SK-N-SH (cell line): ENCODE measurements at regions of chr19 and their contacts with region 1.

Region 1: DNA sequence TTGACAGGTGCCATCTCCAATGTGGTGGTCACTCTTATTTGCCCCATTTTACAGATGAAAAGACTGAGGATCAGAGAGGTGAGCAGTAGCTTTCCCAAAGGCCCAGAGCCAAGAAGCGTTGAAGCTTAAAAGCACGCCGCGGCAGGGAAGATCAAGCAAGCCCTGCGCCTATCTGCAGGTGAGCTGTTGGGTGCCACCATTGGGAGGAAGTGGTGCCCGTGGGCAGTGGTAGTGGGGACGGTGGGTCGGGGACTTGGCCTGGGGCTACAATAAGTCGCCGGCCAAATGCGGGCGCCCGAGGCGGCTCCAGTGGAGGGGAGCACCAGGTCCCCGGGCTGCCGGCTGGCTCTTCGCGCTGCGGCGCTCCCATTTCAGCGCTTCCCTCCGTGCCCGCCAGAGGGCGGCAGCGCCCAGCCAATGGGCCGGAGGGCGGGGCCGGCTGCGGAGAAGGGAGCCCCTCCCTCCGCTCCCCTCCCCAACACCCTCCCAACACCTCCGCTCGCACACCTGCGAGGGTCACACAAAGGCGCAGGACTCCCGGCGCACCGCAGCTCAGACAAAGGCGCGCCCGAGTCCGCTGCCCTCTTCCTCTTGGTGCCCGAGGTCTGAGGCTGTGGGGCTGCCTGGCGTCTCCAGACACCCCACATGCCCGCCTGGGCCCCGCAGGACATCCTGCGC is 744 bp upstream of the POU2F2 start:
- DNase-seq: peak; percentile 96
- H3K4me3 ChIP-seq: peak overlapping the region; percentile 24 to 35; a peak in 2 of 4 replicates
- H3K27ac ChIP-seq: no peak overlapping the region
- H3K4me1 ChIP-seq: peaks cover 3 to 22% of the 10 kb centered on the region in 2 experiments; a peak in 2 of 4 replicates
- H3K27me3 ChIP-seq: no peaks in the 10 kb centered on the region; the same call in none of the 2 replicates
- CTCF ChIP-seq: peak; percentile 80
- EP300 ChIP-seq: no peak
- RAD21 ChIP-seq: peak; percentile 92

Region 2: GRCh38 chr19:42098781-42099180 is 34.2 kb before region 1 on chr19:
- CTCF ChIA-PET with region 1: interaction called, 12 read pairs
- POLR2A ChIA-PET with region 1: no interaction called
- DNase-seq: no peak
- H3K4me3 ChIP-seq: no peak overlapping the region
- H3K27ac ChIP-seq: no peak overlapping the region
- H3K4me1 ChIP-seq: peaks cover 0 to 8% of the 10 kb centered on the region in 2 experiments; a peak in 1 of 4 replicates
- H3K27me3 ChIP-seq: no peaks in the 10 kb centered on the region
- CTCF ChIP-seq: no peak
- EP300 ChIP-seq: no peak
- RAD21 ChIP-seq: no peak

Region 3: GRCh38 chr19:42113641-42114348 is 19.2 kb before region 1 on chr19:
- CTCF ChIA-PET with region 1: interaction called, 38 read pairs
- POLR2A ChIA-PET with region 1: no interaction called
- DNase-seq: no peak
- H3K4me3 ChIP-seq: peak overlapping the region in 1 of 2 experiments; percentile 36; a peak in 2 of 4 replicates
- H3K27ac ChIP-seq: peak overlapping the region; percentile 1 to 98; a peak in 3 of 4 replicates
- H3K4me1 ChIP-seq: peaks cover 6 to 40% of the 10 kb centered on the region in 2 experiments; a peak in 3 of 4 replicates
- H3K27me3 ChIP-seq: no peaks in the 10 kb centered on the region
- CTCF ChIP-seq: peak; percentile 50
- EP300 ChIP-seq: peak in 1 of 2 experiments; percentile 88; a peak in 1 of 4 replicates
- RAD21 ChIP-seq: no peak

Region 4: DNA sequence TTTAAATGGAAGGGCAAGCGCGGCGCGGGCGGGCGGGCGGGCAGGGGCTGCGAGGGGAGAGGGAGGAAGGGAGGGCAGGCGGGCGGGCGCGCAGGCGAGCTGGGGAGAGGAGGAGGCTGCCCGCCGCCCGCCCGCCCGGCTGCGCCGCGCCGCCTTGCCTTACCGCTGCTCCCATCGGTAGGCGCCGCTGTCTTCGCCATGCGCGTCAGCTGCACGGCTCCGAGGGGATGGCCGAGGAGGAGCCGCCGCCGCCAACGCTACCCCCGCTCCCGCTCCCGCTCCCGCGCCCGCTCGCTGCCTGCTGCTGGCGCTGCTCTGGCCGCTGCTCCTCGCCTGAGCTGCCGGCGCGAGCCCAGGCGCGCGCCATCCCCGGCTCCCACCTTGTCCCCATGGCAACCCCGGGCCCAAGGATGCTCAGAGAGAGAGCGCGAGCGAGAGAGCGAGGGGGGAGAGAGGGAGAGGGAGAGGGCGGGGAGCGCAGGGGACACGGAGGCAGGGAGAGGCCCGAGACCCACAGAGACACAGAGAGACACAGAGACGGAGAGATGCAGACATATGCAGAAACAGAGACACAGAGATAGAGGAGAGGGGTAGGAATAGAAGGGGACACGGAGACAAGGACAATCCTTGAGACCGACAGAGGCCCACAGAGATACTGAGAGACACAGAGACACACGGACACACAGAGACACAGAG is 44.1 kb after region 1 on chr19:
- CTCF ChIA-PET with region 1: interaction called, 177 read pairs
- POLR2A ChIA-PET with region 1: no interaction called
- DNase-seq: peak; percentile 91
- H3K4me3 ChIP-seq: peak overlapping the region; percentile 52 to 78
- H3K27ac ChIP-seq: peak overlapping the region in 1 of 2 experiments; percentile 41; a peak in 1 of 4 replicates
- H3K4me1 ChIP-seq: peaks cover 0 to 11% of the 10 kb centered on the region in 2 experiments; a peak in 1 of 4 replicates
- H3K27me3 ChIP-seq: peaks cover 37% of the 10 kb centered on the region
- CTCF ChIP-seq: peak; percentile 36
- EP300 ChIP-seq: no peak
- RAD21 ChIP-seq: no peak

Region 5: GRCh38 chr19:42184401-42184861 is 51.4 kb after region 1 on chr19:
- CTCF ChIA-PET with region 1: interaction called, 177 read pairs
- POLR2A ChIA-PET with region 1: no interaction called
- DNase-seq: peak; percentile 85
- H3K4me3 ChIP-seq: no peak overlapping the region; a peak in 1 of 4 replicates
- H3K27ac ChIP-seq: no peak overlapping the region
- H3K4me1 ChIP-seq: no peaks in the 10 kb centered on the region
- H3K27me3 ChIP-seq: peaks cover 5% of the 10 kb centered on the region; the same call in 1 of the 2 replicates
- CTCF ChIP-seq: peak; percentile 89
- EP300 ChIP-seq: no peak
- RAD21 ChIP-seq: peak; percentile 92